Heart right ventricle (tissue), 16 donors: ENCODE measurements at regions of chr1 and their contacts with region 1.

Region 1: GRCh38 chr1:178477841-178478240 is 18.9 kb downstream of the CLEC20A start:
- DNase-seq: no peak
- ATAC-seq: no peak
- H3K4me3 ChIP-seq: no peak overlapping the region
- H3K27ac ChIP-seq: no peak overlapping the region
- H3K4me1 ChIP-seq: no peaks in the 10 kb centered on the region
- H3K27me3 ChIP-seq: no peaks in the 10 kb centered on the region
- CTCF ChIP-seq: no peak

Region 2: GRCh38 chr1:178004926-178005391 is 472.9 kb before region 1 on chr1:
- intact Hi-C with region 1: no loop called
- DNase-seq: no peak
- ATAC-seq: no peak
- H3K4me3 ChIP-seq: no peak overlapping the region
- H3K27ac ChIP-seq: no peak overlapping the region
- H3K4me1 ChIP-seq: peaks cover 0 to 3% (median 0%) of the 10 kb centered on the region in 9 donors
- H3K27me3 ChIP-seq: no peaks in the 10 kb centered on the region
- CTCF ChIP-seq: no peak

Region 3: GRCh38 chr1:178434360-178434759 is 43.5 kb before region 1 on chr1:
- intact Hi-C with region 1: no loop called
- DNase-seq: no peak
- ATAC-seq: no peak
- H3K4me3 ChIP-seq: no peak overlapping the region
- H3K27ac ChIP-seq: no peak overlapping the region
- H3K4me1 ChIP-seq: peaks cover 0 to 18% (median 4%) of the 10 kb centered on the region in 9 donors
- H3K27me3 ChIP-seq: no peaks in the 10 kb centered on the region
- CTCF ChIP-seq: no peak

Region 4: DNA sequence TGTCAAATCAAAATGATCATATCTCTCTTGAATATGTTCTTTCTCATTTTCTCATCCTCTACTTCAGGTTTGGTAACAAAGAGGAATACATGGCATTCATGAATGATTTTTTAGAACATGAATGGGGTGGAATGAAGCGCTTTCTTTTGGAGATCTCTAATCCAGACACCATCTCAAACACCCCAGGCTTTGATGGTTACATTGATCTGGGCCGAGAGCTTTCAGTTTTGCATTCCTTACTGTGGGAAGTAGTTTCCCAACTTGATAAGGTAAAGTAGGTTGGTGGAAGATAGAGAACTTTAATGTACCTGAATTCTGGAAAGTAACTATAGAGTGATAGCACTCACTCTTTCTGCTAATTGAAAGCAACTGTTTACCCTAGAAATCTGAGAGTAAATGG is 23.5 kb before region 1 on chr1:
- intact Hi-C with region 1: loop called in 1 of 10 experiments (anchors 2 kb)
- DNase-seq: no peak
- ATAC-seq: no peak
- H3K4me3 ChIP-seq: no peak overlapping the region
- H3K27ac ChIP-seq: no peak overlapping the region
- H3K4me1 ChIP-seq: peaks cover 0 to 2% (median 0%) of the 10 kb centered on the region in 9 donors
- H3K27me3 ChIP-seq: no peaks in the 10 kb centered on the region
- CTCF ChIP-seq: no peak

Region 5: GRCh38 chr1:178518894-178519293 is 41.1 kb after region 1 on chr1:
- intact Hi-C with region 1: no loop called
- DNase-seq: no peak
- ATAC-seq: no peak
- H3K4me3 ChIP-seq: no peak overlapping the region
- H3K27ac ChIP-seq: no peak overlapping the region
- H3K4me1 ChIP-seq: peaks cover 0 to 2% (median 0%) of the 10 kb centered on the region in 9 donors
- H3K27me3 ChIP-seq: no peaks in the 10 kb centered on the region
- CTCF ChIP-seq: no peak

Region 6: GRCh38 chr1:178857126-178857525 is 379.3 kb after region 1 on chr1:
- intact Hi-C with region 1: no loop called
- DNase-seq: no peak
- ATAC-seq: no peak
- H3K4me3 ChIP-seq: no peak overlapping the region
- H3K27ac ChIP-seq: no peak overlapping the region
- H3K4me1 ChIP-seq: no peaks in the 10 kb centered on the region
- H3K27me3 ChIP-seq: no peaks in the 10 kb centered on the region
- CTCF ChIP-seq: no peak